Right ventricle myocardium inferior (tissue), 1 donor: ENCODE measurements at regions of chr14 and their contacts with region 1.

Region 1: DNA sequence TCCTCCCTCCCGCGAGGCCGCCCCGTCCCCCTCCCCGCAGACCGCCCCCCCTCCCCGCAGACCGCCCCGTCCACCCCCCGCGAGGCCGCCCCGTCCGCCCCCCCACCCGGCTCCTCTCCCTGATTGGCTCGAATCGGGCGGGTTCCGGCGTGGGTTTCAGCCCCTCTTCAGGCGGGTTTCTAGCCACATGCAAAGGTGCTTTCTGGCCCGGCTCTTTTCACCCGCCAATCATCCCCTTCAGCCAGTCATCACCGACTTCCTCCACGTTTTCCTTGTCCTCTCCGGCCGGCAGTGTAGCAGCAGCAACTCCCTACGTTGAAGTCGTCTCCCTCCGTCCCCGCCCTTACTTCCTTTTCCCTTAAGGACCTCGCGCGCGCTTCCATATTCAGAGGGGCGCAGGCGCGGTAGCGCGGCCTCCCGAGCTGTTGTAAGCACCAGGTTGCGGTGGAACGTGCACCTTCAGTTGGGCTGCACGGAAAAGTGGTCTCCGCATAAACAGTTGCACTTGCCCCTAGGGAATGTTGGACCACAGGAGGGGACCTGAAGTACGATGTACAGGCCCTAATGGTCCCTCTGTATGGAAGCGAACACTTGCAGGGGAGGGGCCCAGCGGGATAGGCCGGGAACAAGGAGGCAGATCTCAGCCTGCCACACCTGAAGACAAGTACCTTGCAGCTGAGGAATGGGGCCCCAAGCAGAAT is 44.6 kb upstream of the ESR2 start:
- DNase-seq: peak; percentile 95
- ATAC-seq: peak; percentile 95

Region 2: GRCh38 chr14:63641473-63642228 is 697.1 kb before region 1 on chr14 and contains the start of gene WDR89:
- intact Hi-C with region 1: loop called (anchors 5 kb)
- DNase-seq: peak; percentile 98
- ATAC-seq: peak; percentile 99
- total RNA-seq, gene WDR89: 6.6 TPM

Region 3: GRCh38 chr14:64266239-64266638 is 72.5 kb before region 1 on chr14:
- intact Hi-C with region 1: no loop called
- DNase-seq: no peak
- ATAC-seq: no peak

Region 4: GRCh38 chr14:64387694-64388532 is 49.1 kb after region 1 on chr14 and contains the start of gene MTHFD1:
- intact Hi-C with region 1: loop called (anchors 2 kb)
- DNase-seq: peak; percentile 100
- ATAC-seq: peak; percentile 92
- total RNA-seq, gene MTHFD1: 58.1 TPM

Region 5: GRCh38 chr14:64478634-64479250 is 140.0 kb after region 1 on chr14:
- intact Hi-C with region 1: loop called (anchors 10 kb)
- DNase-seq: no peak
- ATAC-seq: no peak

Region 6: GRCh38 chr14:64503478-64504309 is 164.9 kb after region 1 on chr14 and contains the start of gene ZBTB25:
- intact Hi-C with region 1: loop called (anchors 10 kb)
- DNase-seq: peak; percentile 97
- ATAC-seq: peak; percentile 86
- total RNA-seq, gene ZBTB25: 17.6 TPM

Region 7: DNA sequence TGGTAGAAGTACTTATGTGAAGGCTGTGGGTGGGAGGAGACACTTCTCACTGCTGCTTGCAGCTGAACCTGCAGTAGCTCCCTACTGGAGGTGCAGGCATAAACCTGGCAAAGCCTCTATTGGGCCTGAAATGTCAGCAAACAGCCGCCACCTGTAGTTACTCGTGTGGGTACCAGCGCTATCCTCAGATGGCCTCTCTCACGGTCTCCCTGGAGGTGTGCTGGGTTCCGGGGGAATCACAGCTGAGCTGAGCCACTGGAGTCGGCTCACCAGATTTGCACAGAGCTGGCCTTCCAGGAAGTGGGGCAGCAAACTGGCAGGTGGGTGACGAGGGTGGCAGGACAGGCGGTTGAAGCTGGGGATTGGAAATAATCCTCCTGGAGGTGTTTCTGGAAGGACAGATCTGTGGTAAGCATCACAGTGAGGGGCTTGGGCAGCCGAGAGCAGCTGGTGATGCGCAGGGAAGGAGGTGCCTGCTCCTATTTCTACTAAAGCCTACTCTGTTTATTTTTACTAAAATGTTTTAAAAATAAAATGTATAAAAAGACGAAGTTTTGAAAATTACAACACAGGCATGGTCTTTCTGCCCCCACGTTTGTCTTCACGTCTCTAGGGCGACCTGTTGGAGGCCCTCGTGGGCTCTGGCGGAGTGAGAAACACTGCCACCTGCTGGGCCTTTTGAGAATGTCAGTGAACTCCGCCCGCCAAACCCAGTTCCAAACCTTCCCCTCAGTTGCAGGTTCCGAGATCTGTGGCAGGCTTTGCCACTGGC is 297.6 kb after region 1 on chr14:
- intact Hi-C with region 1: loop called (anchors 5 kb)
- DNase-seq: peak; percentile 82
- ATAC-seq: peak; percentile 88